ENCODE measurements at regions of chr17 and their contacts with region 1.

Region 1: DNA sequence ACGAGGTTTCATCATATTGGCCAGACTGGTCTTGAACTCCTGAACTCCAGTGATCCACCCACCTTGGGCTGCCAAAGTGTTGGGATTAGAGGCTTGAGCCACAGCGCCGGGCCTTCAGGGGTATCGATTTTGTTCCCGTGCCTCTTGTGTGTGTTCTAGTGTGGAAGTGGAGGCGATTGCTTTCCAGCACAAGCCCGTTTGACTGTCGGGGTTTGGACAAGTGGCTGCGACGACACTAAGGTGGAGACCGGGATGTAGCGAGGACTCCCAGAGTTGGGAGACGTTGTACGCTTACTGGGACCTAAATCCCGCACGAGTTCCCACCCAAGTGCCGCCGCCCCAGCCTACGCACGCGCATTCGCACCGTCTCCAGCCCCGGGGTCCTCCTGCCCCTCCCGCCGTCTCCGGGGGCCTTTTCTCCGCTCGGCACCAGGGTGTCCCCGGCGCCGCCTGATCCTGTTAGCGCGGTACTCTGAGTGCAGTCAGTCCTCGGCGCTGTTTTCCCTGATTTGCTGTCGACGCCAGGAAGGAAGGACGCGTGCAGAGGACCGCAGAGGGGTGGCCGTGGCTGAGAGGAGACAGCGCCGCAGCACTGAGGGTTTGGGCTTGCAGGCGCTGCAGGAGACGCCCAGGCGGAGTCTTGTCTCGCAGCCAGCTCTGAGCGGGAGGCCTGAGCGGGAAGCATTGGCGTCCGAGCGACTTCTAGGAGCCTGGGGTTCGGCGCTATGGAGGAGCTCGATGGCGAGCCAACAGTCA is at the start of gene NUP85:
- DNase-seq: peak; percentile 56
- H3K4me3 ChIP-seq: peak within 1 kb of the TSS; percentile 90
- H3K27me3 ChIP-seq: no peaks in the 10 kb centered on the region
- CTCF ChIP-seq: no peak
- polyA plus RNA-seq, gene NUP85: 45.4 and 74.1 TPM in 2 replicates

Region 2: DNA sequence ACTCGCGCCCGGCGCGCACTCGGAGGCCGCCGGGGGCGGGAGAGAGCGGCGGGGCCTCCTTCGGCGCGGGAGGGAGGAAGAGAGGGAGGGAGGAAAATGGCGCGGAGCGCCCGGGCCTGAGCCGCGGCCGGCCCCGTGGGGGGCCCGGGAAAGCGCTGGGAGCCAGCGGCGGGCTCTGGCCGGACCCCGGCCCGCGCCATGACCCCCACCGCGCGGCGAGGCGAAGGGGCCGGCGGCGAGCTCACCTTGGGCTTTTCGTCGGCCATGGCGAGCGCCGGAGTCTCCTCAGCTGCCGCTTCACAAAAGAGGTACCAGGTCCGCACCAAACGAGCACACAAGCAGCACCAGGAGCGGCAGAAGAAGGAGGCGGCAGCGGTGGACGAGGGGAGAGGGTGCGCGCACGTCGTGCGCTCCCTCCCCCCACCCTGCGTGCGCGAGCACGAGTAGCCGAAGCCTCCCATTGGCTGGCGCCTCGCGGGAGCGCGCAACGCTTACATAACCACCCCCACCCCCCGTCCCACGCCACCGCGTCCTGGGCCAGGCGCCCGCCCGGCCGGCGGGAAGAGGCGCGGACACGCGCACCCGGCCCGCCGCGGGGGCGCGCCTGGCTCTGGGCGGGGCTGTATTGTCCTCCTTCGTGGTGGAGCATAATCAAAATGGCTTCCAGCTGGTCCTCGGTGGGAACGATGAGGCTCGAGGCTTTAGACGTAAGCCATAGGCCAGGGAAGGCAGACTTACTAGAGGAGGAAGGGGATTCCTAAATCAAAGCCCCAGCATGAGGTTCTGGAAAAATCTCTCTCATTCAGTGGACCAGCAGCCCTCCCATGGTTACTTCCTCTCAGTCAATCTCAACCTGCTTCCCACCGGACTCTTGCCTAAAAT is 22.4 kb before region 1 on chr17 and contains the start of gene SUMO2:
- CTCF ChIA-PET with region 1: interaction called, 44 read pairs
- POLR2A ChIA-PET with region 1: no interaction called
- DNase-seq: peak; percentile 60
- H3K4me3 ChIP-seq: peak within 1 kb of the TSS; percentile 98
- H3K27me3 ChIP-seq: no peaks in the 10 kb centered on the region
- CTCF ChIP-seq: no peak; the same call in 1 of the 2 replicates
- polyA plus RNA-seq, gene SUMO2: 131 and 304 TPM in 2 replicates

Measured in BJ (cell line).